ENCODE measurements at regions of chr9 and their contacts with region 1.

Region 1: GRCh38 chr9:32350682-32351081 is 33.8 kb upstream of the ACO1 start:
- DNase-seq: peak; percentile 14
- H3K4me3 ChIP-seq: no peak overlapping the region
- H3K27ac ChIP-seq: no peak overlapping the region
- H3K4me1 ChIP-seq: no peaks in the 10 kb centered on the region
- H3K27me3 ChIP-seq: no peaks in the 10 kb centered on the region
- CTCF ChIP-seq: peak; percentile 25 to 43

Region 2: DNA sequence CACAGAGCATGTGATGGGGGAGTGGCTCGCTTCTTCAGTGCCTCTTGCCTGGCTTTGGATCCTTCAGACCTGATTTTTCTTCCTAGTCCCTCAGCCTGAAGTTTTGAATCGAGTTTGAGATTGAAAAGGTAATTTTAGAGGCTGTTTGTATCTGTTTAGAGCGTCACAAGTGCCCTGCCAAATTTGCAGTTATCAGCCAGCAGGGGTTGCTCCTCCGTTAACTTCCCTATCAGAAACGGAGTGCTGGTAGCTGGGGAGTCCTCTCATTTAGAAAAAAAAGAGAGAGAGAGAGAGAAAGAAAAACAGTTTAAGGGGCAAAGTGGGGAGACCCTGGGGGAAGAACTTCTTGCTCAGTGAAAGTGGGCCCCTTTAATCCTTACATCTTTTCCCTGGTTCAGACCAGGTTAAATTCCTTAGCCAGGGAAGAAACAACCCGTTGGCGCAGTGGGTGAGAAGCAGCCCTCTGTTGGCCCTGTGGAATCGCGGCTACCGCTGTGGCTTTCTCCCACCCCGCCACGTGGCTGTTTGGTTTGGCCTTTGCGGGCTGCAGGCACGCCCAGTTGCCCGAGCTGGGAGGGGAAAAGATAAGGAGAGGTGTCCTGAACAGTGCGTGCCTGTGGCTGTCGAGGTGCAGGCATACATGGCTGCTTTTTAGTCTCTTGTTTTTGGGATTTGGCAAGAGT is 543.0 kb before region 1 on chr9:
- CTCF ChIA-PET with region 1: no interaction called
- dilution Hi-C with region 1: no loop called
- in situ Hi-C with region 1: no loop called
- intact Hi-C with region 1: loop called (anchors 2 kb)
- DNase-seq: no peak
- H3K4me3 ChIP-seq: no peak overlapping the region
- H3K27ac ChIP-seq: no peak overlapping the region
- H3K4me1 ChIP-seq: no peaks in the 10 kb centered on the region
- H3K27me3 ChIP-seq: no peaks in the 10 kb centered on the region
- CTCF ChIP-seq: peak in 1 of 2 donors; percentile 26

Region 3: GRCh38 chr9:31916591-31917241 is 434.0 kb before region 1 on chr9:
- CTCF ChIA-PET with region 1: no interaction called
- dilution Hi-C with region 1: no loop called
- in situ Hi-C with region 1: no loop called
- intact Hi-C with region 1: loop called (anchors 1 kb)
- DNase-seq: no peak
- H3K4me3 ChIP-seq: no peak overlapping the region
- H3K27ac ChIP-seq: no peak overlapping the region
- H3K4me1 ChIP-seq: no peaks in the 10 kb centered on the region
- H3K27me3 ChIP-seq: peaks cover 3% of the 10 kb centered on the region
- CTCF ChIP-seq: peak in 1 of 2 donors; percentile 64

Region 4: DNA sequence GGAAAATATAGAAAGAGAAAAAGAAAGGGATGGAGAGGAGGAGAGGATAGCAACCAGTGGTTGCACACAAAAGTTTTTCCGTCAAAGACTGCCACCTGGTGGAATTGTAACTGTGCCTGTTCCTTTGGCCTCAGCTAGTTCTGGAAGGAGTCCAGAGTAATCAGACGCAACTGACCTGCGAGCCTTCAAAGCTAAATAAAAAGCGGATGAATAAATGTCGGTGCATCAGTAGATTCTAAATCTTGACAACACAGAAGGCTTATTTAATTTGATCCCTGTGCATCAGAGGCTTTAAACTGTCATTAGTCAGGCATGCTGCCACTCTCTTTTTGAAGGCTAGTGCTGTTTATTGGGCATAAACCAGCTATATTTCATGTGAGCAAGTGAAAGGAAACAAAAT is 99.1 kb before region 1 on chr9:
- CTCF ChIA-PET with region 1: no interaction called
- dilution Hi-C with region 1: loop called (anchors 25 kb)
- in situ Hi-C with region 1: no loop called
- intact Hi-C with region 1: loop called (anchors 5 kb)
- DNase-seq: peak; percentile 51
- H3K4me3 ChIP-seq: no peak overlapping the region
- H3K27ac ChIP-seq: no peak overlapping the region
- H3K4me1 ChIP-seq: no peaks in the 10 kb centered on the region
- H3K27me3 ChIP-seq: no peaks in the 10 kb centered on the region
- CTCF ChIP-seq: peak; percentile 73 to 82